Natural killer cell (primary cell): ENCODE measurements at regions of chr10 and their contacts with region 1.

Region 1: DNA sequence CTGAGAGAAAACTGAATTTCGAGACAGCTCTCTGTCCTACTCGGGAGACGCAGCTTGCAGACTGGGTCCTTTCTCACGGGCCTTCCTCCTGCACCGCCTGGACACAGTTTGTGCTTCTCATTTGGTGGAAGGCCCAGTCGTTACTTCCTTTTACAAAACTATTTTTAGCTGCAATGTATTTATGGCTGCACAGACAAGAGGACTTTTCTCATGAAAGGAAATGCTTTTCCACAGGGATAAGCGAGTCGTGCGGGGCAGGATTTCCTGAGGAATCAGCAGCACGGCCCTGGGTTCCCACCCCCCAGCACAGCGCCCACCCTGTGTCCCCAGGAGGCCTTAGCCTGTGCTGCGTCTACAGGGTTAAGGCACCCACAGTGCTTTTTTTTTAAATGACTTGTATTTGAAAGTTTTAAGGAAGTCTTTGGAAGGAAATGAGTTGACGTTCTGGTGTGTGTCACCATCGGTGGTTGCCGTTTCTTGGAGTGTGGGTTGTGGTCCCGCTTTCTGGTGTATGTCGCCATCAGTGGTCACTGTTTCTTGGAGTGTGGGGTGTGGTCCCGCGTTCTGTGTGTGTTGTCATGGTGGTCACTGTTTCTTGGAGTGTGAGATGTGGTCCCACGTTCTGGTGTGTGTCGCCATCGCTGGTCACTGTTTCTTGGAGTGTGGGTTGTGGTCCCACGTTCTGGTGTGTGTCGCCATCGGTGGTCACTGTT is 50.9 kb downstream of the INPP5A start:
- DNase-seq: peak; percentile 39 to 53
- ATAC-seq: peak; percentile 52 to 75 (median 60)
- H3K4me3 ChIP-seq: no peak overlapping the region
- H3K4me3 Mint-ChIP-seq: peak overlapping the region; percentile 76
- H3K27ac ChIP-seq: peak overlapping the region; percentile 60
- H3K27ac Mint-ChIP-seq: peak overlapping the region; percentile 68 to 89
- H3K4me1 ChIP-seq: peaks cover 56% of the 10 kb centered on the region
- H3K4me1 Mint-ChIP-seq: peaks cover 48 to 61% of the 10 kb centered on the region in 2 donors
- H3K27me3 ChIP-seq: no peaks in the 10 kb centered on the region
- H3K27me3 Mint-ChIP-seq: peaks cover 6 to 10% of the 10 kb centered on the region in 2 donors
- CTCF ChIP-seq: no peak

Region 2: GRCh38 chr10:132554991-132555647 is 33.3 kb before region 1 on chr10:
- intact Hi-C with region 1: loop called (anchors 5 kb)
- DNase-seq: peak; percentile 64
- ATAC-seq: peak; percentile 59 to 74 (median 62)
- H3K4me3 ChIP-seq: peak overlapping the region; percentile 21
- H3K4me3 Mint-ChIP-seq: no peak overlapping the region
- H3K27ac ChIP-seq: peak overlapping the region; percentile 68
- H3K27ac Mint-ChIP-seq: no peak overlapping the region
- H3K4me1 ChIP-seq: peaks cover 54% of the 10 kb centered on the region
- H3K4me1 Mint-ChIP-seq: peaks cover 26 to 32% of the 10 kb centered on the region in 2 donors
- H3K27me3 ChIP-seq: no peaks in the 10 kb centered on the region
- H3K27me3 Mint-ChIP-seq: peaks cover 11 to 18% of the 10 kb centered on the region in 2 donors
- CTCF ChIP-seq: no peak

Region 3: DNA sequence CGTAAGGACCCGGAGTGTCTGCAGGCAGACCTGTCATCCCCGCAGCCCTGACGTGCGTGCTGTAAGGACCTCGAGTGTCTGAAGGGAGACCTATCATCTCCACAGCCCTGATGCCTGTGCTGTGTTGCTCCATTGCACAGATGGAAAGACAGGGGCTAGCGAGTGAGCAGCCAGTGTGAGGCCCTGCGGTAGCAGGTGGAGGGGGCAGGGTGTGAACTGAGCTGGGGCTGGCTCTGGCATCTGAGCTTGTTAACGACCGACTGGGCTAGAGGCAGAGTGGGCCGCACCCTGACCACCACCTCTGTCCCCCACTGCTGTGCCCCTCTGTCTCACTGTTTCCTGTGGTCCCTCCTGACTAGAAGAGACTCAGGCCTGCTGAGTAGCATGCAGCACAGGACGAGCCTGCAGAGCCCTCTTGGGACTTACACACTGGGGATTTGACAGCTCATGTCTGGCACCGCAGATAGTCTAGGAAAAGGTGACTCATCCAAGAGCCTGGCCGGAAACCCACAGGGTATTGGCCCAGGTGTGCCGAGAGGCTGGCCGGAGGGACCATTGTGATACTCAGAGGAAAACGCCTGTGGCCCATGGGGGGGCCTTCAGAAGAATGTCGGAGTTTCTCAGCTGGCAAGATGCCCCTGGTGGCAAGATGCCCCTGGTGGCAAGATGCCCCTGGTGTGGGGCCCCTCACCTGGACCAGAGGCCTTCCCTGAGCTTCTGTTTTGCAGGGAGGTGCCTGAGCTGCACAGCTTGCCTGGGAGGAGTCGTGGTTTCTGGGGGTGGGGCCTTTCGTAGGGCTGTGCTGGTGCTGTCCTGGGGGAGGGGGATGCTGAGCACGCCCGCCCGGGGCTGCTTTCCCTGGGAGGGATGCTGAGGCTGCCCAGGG is 16.6 kb before region 1 on chr10:
- intact Hi-C with region 1: loop called (anchors 2 kb)
- DNase-seq: peak; percentile 48 to 50
- ATAC-seq: peak; percentile 42 to 60 (median 58)
- H3K4me3 ChIP-seq: no peak overlapping the region
- H3K4me3 Mint-ChIP-seq: no peak overlapping the region
- H3K27ac ChIP-seq: peak overlapping the region; percentile 68
- H3K27ac Mint-ChIP-seq: no peak overlapping the region
- H3K4me1 ChIP-seq: peaks cover 54% of the 10 kb centered on the region
- H3K4me1 Mint-ChIP-seq: peaks cover 5 to 18% of the 10 kb centered on the region in 2 donors
- H3K27me3 ChIP-seq: no peaks in the 10 kb centered on the region
- H3K27me3 Mint-ChIP-seq: no peaks in the 10 kb centered on the region
- CTCF ChIP-seq: peak; percentile 14

Region 4: DNA sequence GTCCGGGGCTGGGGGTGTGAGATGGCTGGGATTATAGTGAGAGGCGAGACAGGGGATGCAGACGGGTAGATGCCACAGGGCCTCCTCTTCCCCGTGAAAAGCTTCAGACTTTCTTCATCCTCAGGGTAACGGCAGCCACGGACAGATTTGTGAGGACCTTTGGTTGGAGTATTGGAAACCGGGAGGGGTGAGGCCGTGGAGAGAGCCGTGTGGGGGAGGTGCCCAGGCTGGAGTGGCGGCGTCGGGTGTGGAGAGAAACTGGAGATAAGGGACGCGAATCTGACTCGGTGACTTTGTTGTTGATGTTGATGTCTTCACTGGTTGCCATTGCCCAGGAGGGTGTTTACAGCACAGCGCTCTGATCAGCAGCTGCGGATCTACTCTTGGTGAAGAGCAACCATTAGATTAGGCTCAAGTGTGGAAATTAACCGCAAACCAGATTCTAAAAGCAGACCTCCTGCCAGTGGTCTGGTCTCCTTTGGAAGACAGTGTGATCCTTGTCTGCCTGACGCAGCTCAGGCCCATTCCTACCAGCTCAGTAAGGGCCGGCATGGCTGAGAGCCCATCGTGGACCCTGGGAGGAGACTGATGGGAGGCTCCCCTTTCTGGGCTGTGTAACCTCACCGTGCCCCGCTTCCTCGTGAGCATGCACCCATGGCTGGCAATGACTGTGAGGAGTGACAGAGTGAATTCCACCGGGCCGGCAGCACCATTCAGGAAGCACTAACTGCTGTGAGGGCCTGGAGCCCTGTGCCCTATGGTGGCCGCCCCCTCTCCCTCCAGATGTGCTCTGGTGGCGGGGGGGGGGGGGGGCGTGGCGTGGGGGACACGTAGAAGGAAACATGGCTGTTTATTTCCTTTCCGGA is 39.4 kb after region 1 on chr10:
- intact Hi-C with region 1: no loop called
- DNase-seq: no peak
- ATAC-seq: peak; percentile 19 to 48 (median 26)
- H3K4me3 ChIP-seq: no peak overlapping the region
- H3K4me3 Mint-ChIP-seq: no peak overlapping the region
- H3K27ac ChIP-seq: no peak overlapping the region
- H3K27ac Mint-ChIP-seq: peak overlapping the region; percentile 9 to 73
- H3K4me1 ChIP-seq: peaks cover 7% of the 10 kb centered on the region
- H3K4me1 Mint-ChIP-seq: peaks cover 14 to 58% of the 10 kb centered on the region in 2 donors
- H3K27me3 ChIP-seq: no peaks in the 10 kb centered on the region
- H3K27me3 Mint-ChIP-seq: peaks cover 8 to 12% of the 10 kb centered on the region in 2 donors
- CTCF ChIP-seq: no peak

Region 5: DNA sequence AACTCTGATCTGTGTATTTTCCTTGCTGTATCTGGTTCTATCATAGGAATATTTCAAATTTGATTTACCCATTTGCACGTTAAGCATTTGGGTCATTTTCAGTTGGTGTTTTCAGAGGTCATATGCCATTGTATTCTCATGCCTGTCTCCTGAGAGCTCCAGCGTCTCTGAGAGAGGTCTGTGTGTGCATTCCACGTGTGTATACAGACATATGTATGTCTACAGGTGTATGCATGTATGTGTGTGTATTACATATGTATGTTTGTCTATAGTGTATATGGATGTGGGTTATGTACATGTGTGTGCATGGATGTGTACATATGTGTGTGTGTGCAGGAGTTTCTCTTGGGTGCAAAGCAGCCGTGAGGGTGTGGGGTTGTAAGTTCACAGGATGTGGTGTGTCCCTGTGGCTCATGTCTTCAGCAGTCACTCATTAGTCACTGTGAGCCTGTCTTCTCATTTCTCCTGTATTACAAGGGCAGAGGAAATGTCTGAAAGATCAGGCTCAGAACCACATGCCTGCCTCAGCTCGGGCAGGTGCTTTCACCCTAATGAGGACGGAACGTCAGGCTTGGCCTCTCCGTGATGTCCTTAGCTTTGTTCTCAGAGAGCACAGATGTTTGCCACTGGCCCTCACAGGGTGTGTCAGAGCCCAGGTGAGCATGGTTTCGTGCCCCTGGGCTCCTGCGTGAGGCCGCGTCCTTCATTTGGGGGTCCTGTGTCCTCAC is 95.9 kb after region 1 on chr10:
- intact Hi-C with region 1: no loop called
- DNase-seq: peak; percentile 47 to 52
- ATAC-seq: peak; percentile 83 to 96 (median 86)
- H3K4me3 ChIP-seq: no peak overlapping the region
- H3K4me3 Mint-ChIP-seq: peak overlapping the region; percentile 59
- H3K27ac ChIP-seq: peak overlapping the region; percentile 46
- H3K27ac Mint-ChIP-seq: peak overlapping the region; percentile 45 to 79
- H3K4me1 ChIP-seq: peaks cover 29% of the 10 kb centered on the region
- H3K4me1 Mint-ChIP-seq: peaks cover 45 to 55% of the 10 kb centered on the region in 2 donors
- H3K27me3 ChIP-seq: no peaks in the 10 kb centered on the region
- H3K27me3 Mint-ChIP-seq: no peaks in the 10 kb centered on the region
- CTCF ChIP-seq: no peak